PC-9 (cell line): ENCODE measurements at regions of chr5 and their contacts with region 1.

Region 1: GRCh38 chr5:66306105-66306843 is 162.2 kb downstream of the SREK1 start:
- DNase-seq: peak; percentile 40 to 44
- H3K4me3 ChIP-seq: no peak overlapping the region
- H3K27ac ChIP-seq: no peak overlapping the region
- H3K4me1 ChIP-seq: no peaks in the 10 kb centered on the region
- H3K27me3 ChIP-seq: peaks cover 11% of the 10 kb centered on the region
- CTCF ChIP-seq: peak; percentile 83

Region 2: GRCh38 chr5:66171349-66172344 is 134.6 kb before region 1 on chr5:
- CTCF ChIA-PET with region 1: interaction called, 13 read pairs
- POLR2A ChIA-PET with region 1: no interaction called
- intact Hi-C with region 1: loop called (anchors 2 kb)
- DNase-seq: peak in 1 of 2 experiments; percentile 5
- H3K4me3 ChIP-seq: no peak overlapping the region
- H3K27ac ChIP-seq: no peak overlapping the region
- H3K4me1 ChIP-seq: no peaks in the 10 kb centered on the region
- H3K27me3 ChIP-seq: no peaks in the 10 kb centered on the region
- CTCF ChIP-seq: peak; percentile 72

Region 3: DNA sequence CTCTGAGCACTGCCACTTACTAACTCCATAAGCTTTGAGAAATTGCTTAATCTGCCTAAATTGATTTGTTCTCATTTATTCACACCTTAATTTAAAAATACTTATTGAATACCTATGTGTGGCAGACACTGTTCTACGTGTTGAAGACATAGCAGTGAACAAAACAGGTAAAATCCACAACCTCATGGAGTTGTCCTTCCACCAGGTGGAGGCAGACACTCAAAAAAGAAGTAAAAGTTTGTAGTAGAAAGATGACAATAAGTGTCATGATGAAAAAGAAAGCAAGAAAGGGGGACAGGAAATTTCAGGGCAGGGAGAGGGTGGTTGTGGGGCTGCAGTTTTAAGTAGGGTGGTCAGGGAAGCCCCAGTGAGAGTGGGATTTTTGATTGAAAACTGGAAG is 67.2 kb before region 1 on chr5:
- CTCF ChIA-PET with region 1: interaction called, 3 read pairs
- POLR2A ChIA-PET with region 1: no interaction called
- intact Hi-C with region 1: loop called (anchors 2 kb)
- DNase-seq: peak in 1 of 2 experiments; percentile 33
- H3K4me3 ChIP-seq: no peak overlapping the region
- H3K27ac ChIP-seq: no peak overlapping the region
- H3K4me1 ChIP-seq: no peaks in the 10 kb centered on the region
- H3K27me3 ChIP-seq: peaks cover 8% of the 10 kb centered on the region; the same call in 1 of the 2 replicates
- CTCF ChIP-seq: peak; percentile 72

Region 4: GRCh38 chr5:66757188-66757833 is 451.0 kb after region 1 on chr5:
- CTCF ChIA-PET with region 1: interaction called, 9 read pairs
- POLR2A ChIA-PET with region 1: no interaction called
- intact Hi-C with region 1: loop called (anchors 1 kb)
- DNase-seq: peak in 1 of 2 experiments; percentile 20
- H3K4me3 ChIP-seq: no peak overlapping the region
- H3K27ac ChIP-seq: no peak overlapping the region
- H3K4me1 ChIP-seq: no peaks in the 10 kb centered on the region
- H3K27me3 ChIP-seq: 0 out of 2 replicates have a peak, but pooled peaks cover 12% of the 10 kb centered on the region
- CTCF ChIP-seq: peak; percentile 67

Region 5: DNA sequence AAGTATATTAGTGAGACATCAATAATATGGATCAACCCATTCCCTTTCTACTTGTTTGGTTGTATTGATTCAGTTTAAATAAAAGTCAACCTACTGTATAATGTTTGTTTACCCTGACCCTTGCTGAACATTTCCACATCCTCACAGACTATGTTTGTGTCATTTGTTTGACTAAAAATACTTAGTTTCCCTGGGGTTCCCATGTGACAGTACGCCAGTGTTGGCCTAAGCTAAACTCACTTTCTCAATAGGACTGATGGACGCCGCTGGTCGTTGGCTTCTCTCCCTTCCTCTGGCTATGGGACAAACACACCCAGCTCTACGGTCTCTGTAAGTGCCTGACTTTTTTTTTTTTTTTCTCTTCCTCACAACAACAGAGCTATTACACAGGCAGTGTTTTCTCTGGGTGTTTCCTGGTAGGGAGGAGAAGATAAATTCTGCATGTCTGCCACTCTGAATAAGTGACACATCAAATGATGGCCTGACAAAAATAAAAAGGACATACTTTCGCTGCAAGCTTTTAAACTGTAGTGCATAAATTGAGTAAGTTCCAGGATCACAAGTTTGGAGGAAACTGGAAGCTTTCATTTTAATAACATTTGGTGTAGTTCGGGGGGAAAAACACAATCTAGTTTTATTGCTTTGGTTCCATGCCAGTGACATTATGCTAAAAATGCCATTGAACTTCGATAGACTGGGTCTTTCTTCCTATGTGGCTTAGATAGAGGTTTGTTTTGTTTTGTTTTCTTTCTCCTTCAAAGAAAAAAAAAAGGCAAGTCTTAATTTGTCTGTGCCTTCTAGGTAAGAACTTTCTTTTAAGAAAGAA is 789.3 kb after region 1 on chr5:
- CTCF ChIA-PET with region 1: no interaction called
- POLR2A ChIA-PET with region 1: no interaction called
- intact Hi-C with region 1: no loop called
- DNase-seq: no peak
- H3K4me3 ChIP-seq: no peak overlapping the region
- H3K27ac ChIP-seq: no peak overlapping the region
- H3K4me1 ChIP-seq: 0 out of 2 replicates have a peak, but pooled peaks cover 7% of the 10 kb centered on the region
- H3K27me3 ChIP-seq: no peaks in the 10 kb centered on the region
- CTCF ChIP-seq: no peak

Region 6: GRCh38 chr5:68272289-68272688 is 1966.0 kb after region 1 on chr5:
- CTCF ChIA-PET with region 1: no interaction called
- POLR2A ChIA-PET with region 1: no interaction called
- intact Hi-C with region 1: loop called (anchors 10 kb)
- DNase-seq: peak in 1 of 2 experiments; percentile 39
- H3K4me3 ChIP-seq: no peak overlapping the region
- H3K27ac ChIP-seq: no peak overlapping the region
- H3K4me1 ChIP-seq: peaks cover 8% of the 10 kb centered on the region
- H3K27me3 ChIP-seq: no peaks in the 10 kb centered on the region
- CTCF ChIP-seq: peak; percentile 68